Activated CD4-positive, alpha-beta memory T cell treated with anti-CD3 and anti-CD28 coated beads, Interleukin-2, amount 10 ng/mL, durations not matched to agents 7 days and 5 days (primary cell): ENCODE measurements at regions of chr17 and their contacts with region 1.

Region 1: DNA sequence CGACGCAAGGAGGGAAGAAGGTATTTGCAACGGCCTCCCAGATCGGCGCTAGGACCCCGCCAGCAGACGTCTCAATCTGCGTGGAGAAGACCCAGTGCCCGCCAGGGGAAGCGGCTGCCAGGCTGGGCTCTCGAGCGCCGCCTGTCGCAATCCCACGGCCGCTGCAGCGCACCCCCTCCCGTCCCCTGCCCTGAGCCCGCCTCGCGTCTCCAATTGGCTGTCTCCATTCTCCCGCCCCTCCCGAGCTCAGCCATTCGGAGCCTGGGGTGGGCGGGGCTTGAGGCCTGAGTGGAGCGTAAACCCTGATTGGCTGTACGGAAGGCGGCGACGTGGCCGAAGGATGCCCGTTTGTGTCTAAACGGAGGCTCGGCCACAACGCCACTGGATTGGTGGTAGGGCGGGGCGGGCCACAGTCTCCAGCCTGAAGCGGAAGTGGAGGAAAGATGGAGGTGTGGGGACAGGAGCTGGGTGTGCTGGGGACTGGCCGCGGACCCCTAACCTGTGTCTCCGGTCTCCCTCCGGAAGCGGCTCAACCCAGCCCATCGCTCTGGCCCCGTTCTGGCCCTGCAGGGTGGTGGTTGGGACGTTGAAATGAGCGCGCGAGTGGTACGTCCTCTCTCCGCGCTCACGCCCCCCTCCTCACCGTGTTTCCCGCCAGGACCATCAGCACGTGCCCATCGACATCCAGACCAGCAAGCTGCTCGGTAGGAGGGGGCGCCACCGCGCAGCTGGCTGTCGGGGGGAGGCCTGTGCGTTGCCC is at the start of gene CDK5RAP3:
- DNase-seq: peak; percentile 100
- H3K4me3 Mint-ChIP-seq: peak within 1 kb of the TSS; percentile 91
- H3K27ac Mint-ChIP-seq: peak within 1 kb of the TSS; percentile 64
- H3K4me1 Mint-ChIP-seq: peaks cover 28% of the 10 kb centered on the region
- H3K27me3 Mint-ChIP-seq: no peaks in the 10 kb centered on the region
- total RNA-seq, gene CDK5RAP3: 194 to 205 TPM

Region 2: DNA sequence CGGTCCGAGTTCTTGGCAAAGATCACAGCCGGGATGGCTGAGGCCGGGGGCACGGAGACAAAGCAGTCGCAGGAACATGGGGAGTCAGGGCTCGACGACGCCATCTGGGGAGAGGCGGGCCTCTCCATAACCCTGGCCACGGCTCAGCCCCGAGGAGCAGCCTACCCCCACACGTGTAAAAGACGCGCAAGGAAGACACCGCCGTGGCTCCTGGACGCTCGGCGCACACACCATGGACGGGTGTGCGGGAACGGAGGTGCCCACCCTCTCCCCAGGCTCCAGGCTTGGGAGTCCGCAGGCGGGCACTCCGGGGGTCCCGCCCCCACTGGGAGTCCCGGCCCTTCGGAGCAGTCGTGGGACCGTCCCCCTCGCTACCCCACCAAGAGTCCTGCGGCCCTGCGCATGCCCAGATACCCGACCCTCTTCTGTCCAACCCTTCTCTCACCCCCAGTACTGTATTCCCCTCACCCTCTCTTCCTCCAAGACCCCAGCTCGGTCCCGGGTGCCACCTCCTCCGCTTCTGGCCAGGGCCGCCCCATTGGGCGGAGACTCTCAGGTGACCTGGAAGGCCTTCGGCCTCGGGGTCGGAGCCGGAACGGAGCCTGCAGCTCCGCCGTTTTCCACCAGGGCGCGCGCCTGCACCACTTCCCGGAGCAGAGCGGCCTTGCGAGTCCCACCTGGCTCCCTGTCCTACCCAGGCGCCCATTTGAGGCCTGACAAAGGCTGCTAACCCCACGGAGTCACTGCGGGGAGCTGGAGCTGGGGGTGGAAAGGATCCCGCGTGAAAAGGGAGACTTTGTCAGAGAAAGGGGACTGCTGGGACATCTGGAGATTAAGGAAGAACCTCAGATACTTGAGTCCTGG is 129.9 kb before region 1 on chr17 and contains the start of gene SCRN2:
- CTCF ChIA-PET with region 1: interaction called, 10 read pairs
- POLR2A ChIA-PET with region 1: interaction called, 6 read pairs
- DNase-seq: peak; percentile 90
- H3K4me3 Mint-ChIP-seq: peak within 1 kb of the TSS; percentile 93
- H3K27ac Mint-ChIP-seq: peak within 1 kb of the TSS; percentile 66
- H3K4me1 Mint-ChIP-seq: peaks cover 36% of the 10 kb centered on the region
- H3K27me3 Mint-ChIP-seq: peaks cover 20% of the 10 kb centered on the region
- total RNA-seq, gene SCRN2: 29.1 to 29.8 TPM

Region 3: GRCh38 chr17:47941236-47941994 is 29.5 kb before region 1 on chr17 and contains the start of gene PNPO:
- CTCF ChIA-PET with region 1: interaction called, 229 read pairs
- POLR2A ChIA-PET with region 1: interaction called, 22 read pairs
- DNase-seq: peak; percentile 97
- H3K4me3 Mint-ChIP-seq: peak within 1 kb of the TSS; percentile 77
- H3K27ac Mint-ChIP-seq: peak within 1 kb of the TSS; percentile 80
- H3K4me1 Mint-ChIP-seq: peaks cover 56% of the 10 kb centered on the region
- H3K27me3 Mint-ChIP-seq: no peaks in the 10 kb centered on the region
- total RNA-seq, gene PNPO: 24.6 to 25.1 TPM

Region 4: GRCh38 chr17:47957591-47958428 is 13.1 kb before region 1 on chr17 and contains the start of gene PRR15L:
- CTCF ChIA-PET with region 1: interaction called, 32 read pairs
- POLR2A ChIA-PET with region 1: interaction called, 14 read pairs
- DNase-seq: no peak
- H3K4me3 Mint-ChIP-seq: no peak within 1 kb of the TSS
- H3K27ac Mint-ChIP-seq: no peak within 1 kb of the TSS
- H3K4me1 Mint-ChIP-seq: no peaks in the 10 kb centered on the region
- H3K27me3 Mint-ChIP-seq: peaks cover 2% of the 10 kb centered on the region
- total RNA-seq, gene PRR15L: not detected